Panc1 (cell line): ENCODE measurements at regions of chr10 and their contacts with region 1.

Region 1: DNA sequence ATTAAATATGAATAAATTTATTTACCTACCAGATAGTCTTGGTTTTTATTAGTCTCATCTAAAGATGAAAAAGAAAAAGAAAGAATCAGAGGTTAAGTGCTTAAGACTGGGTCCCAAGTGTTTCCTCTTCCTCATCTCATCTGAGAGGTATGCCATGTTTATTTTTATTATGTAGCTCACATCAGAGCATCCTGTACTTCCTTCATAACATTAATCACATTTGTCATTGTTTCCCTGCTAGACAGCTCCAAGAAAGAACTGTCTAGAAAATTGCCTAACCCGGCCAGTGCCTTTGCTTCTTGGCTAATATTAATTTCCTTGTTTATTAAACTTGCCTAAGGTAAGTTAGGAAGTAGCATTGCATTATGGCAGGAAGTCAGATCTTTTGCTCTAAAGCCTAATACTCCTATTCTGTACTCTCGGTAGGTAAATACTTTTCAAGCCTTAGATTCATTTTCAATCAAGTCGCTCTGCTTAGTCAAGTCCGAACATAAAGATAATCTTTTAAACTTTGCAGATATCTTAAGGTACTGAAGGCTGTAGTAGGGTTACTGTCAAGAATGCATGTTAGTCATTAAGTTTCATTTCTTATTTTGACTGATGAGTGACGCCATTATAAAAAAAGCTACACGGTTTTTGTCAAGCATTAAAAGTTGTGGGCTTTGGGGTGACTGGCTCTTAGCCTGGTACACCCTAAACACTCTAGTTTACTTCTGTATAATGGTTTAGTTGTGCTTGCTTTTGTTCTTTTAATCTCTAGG is 47.4 kb downstream of the ZMYND11 start:
- DNase-seq: no peak
- ATAC-seq: no peak
- H3K4me3 ChIP-seq: no peak overlapping the region
- H3K27ac ChIP-seq: no peak overlapping the region
- H3K4me1 ChIP-seq: no peaks in the 10 kb centered on the region
- H3K27me3 ChIP-seq: no peaks in the 10 kb centered on the region
- CTCF ChIP-seq: no peak

Region 2: DNA sequence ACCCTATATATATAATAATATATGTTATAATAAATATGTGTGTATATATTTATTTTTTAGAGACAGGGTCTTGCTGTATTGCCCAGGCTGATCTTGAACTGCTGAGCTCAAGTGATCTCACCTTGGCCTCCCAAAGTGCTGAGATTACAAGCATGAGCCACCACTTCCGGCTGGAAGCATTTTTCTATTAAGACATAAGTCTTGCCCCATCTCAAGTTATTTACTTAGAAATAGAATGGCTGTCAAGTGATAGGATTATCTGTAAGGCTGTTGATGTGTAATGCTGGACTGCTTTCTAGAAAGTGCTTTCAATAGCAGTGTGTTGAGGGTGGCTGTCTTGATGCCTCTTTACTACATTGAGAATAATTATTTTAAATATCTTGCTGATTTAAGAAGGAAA is 17.8 kb after region 1 on chr10:
- CTCF ChIA-PET with region 1: no interaction called
- POLR2A ChIA-PET with region 1: no interaction called
- in situ Hi-C with region 1: no loop called
- intact Hi-C with region 1: loop called (anchors 1 kb)
- DNase-seq: no peak
- ATAC-seq: no peak
- H3K4me3 ChIP-seq: no peak overlapping the region
- H3K27ac ChIP-seq: no peak overlapping the region
- H3K4me1 ChIP-seq: no peaks in the 10 kb centered on the region
- H3K27me3 ChIP-seq: no peaks in the 10 kb centered on the region
- CTCF ChIP-seq: no peak